ENCODE measurements at regions of chr9 and their contacts with region 1.

Region 1: GRCh38 chr9:72635197-72635596 is 113.8 kb downstream of the TMC1 start:
- DNase-seq: no peak
- ATAC-seq: no peak
- H3K4me3 ChIP-seq: no peak overlapping the region
- H3K27ac ChIP-seq: no peak overlapping the region
- H3K4me1 ChIP-seq: no peaks in the 10 kb centered on the region
- H3K27me3 ChIP-seq: peaks cover 0 to 5% of the 10 kb centered on the region in 2 donors

Region 2: GRCh38 chr9:72315510-72316311 is 319.5 kb before region 1 on chr9:
- intact Hi-C with region 1: no loop called
- DNase-seq: no peak
- ATAC-seq: peak; percentile 61
- H3K4me3 ChIP-seq: no peak overlapping the region
- H3K27ac ChIP-seq: peak overlapping the region in 1 of 2 donors; percentile 68
- H3K4me1 ChIP-seq: peaks cover 0 to 2% of the 10 kb centered on the region in 2 donors
- H3K27me3 ChIP-seq: no peaks in the 10 kb centered on the region

Region 3: DNA sequence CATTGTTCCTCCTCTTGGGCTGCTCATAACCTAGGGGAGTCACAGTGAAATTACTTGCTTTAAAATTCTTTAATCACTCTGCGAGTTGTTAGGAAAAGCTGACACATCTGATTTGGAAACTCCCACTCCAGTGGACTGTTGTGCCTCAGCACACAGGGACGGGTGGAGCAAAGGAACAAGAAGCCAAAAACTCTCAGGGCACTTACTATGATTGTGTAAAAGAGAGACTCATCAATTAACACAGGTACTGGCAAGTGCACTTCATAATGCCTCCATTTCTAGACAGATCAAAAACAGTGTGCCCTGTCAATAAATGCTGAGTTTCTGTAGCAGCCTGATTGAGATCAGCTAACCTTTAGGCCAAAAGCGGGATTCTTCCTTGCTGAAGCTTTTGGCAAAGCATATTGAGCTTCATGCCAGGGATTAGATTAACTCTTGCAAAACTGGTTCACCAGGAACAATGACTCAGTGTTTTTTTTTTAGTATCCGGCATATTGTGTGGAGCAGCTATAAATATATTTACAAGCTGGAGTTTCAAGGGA is 57.9 kb before region 1 on chr9:
- intact Hi-C with region 1: no loop called
- DNase-seq: no peak
- ATAC-seq: peak; percentile 76
- H3K4me3 ChIP-seq: no peak overlapping the region
- H3K27ac ChIP-seq: no peak overlapping the region
- H3K4me1 ChIP-seq: peaks cover 0 to 5% of the 10 kb centered on the region in 2 donors
- H3K27me3 ChIP-seq: no peaks in the 10 kb centered on the region

Region 4: GRCh38 chr9:72661401-72662135 is 26.4 kb after region 1 on chr9:
- intact Hi-C with region 1: no loop called
- DNase-seq: no peak
- ATAC-seq: no peak
- H3K4me3 ChIP-seq: no peak overlapping the region
- H3K27ac ChIP-seq: no peak overlapping the region
- H3K4me1 ChIP-seq: no peaks in the 10 kb centered on the region
- H3K27me3 ChIP-seq: no peaks in the 10 kb centered on the region

Region 5: DNA sequence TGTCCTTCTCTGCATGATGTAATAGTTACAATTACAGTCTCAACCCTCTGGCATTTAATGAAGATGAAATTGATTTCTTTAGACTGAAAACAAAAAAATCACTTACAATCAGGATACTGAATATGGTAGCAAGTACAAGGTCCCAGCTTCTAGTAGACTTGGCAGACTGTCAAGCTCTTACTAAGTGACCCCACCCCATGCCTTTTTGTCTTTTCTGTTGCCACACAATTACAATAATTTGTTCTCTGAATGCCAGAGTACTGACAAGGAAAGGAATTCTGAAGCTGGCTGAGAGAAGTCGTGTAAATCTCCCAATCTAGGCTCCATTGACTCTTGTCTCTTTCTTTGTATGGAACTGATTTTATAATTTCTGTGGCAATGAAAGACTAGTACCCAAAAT is 40.4 kb after region 1 on chr9:
- intact Hi-C with region 1: no loop called
- DNase-seq: no peak
- ATAC-seq: no peak
- H3K4me3 ChIP-seq: no peak overlapping the region
- H3K27ac ChIP-seq: no peak overlapping the region
- H3K4me1 ChIP-seq: no peaks in the 10 kb centered on the region
- H3K27me3 ChIP-seq: no peaks in the 10 kb centered on the region

Region 6: GRCh38 chr9:72695365-72695764 is 60.2 kb after region 1 on chr9:
- intact Hi-C with region 1: loop called in 1 of 2 experiments (anchors 10 kb)
- DNase-seq: no peak
- ATAC-seq: no peak
- H3K4me3 ChIP-seq: no peak overlapping the region
- H3K27ac ChIP-seq: no peak overlapping the region
- H3K4me1 ChIP-seq: no peaks in the 10 kb centered on the region
- H3K27me3 ChIP-seq: no peaks in the 10 kb centered on the region